ENCODE measurements at regions of chr10 and their contacts with region 1.

Region 1: DNA sequence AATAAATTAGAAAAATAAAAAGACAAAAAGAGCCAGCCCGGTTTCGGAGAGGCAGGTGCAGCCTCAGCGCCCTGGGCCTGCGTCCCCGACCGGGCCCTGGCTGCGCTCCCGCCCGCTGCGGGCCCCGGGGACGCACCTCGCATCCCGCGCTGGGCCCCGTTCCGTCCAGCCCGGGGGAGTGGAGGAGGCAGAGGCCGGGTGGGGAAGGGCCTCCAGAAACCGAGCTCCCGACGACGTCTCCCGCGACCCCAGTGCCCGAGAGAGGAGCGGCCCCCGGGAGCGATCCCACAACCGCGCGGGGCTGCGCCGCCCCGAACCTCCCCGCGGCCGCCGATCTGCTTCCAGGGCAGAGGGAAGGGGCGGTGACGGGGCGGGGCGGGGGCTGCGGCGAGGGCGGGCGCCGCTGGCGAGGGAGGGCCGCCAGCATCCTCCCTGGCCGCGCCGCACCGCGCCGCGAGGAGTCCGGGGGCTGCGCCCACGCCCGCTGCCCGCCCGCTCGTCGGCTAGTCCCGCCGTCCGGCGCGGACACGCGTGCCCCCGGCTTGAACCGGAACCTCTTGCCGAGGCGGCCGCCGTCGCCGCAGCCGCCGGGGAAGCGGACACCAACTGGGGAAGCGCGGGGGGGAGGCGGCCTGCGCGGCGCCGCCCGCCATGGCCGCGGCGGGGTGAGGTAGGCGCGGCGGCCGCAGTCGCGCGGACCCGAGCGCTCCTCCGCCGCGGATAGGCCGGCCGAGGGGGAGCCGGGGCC is at the start of gene CCNY:
- DNase-seq: peak; percentile 84 to 86
- ATAC-seq: peak; percentile 86 to 94 (median 90)
- H3K4me3 ChIP-seq: peak within 1 kb of the TSS; percentile 91 to 99 (median 96)
- H3K27ac ChIP-seq: peak within 1 kb of the TSS; percentile 85 to 96 (median 92)
- H3K4me1 ChIP-seq: peaks cover 14 to 84% (median 78%) of the 10 kb centered on the region in 9 donors
- H3K27me3 ChIP-seq: no peaks in the 10 kb centered on the region
- CTCF ChIP-seq: no peak
- total RNA-seq, gene CCNY: 69.9 to 99.4 (median 90.1) TPM

Region 2: DNA sequence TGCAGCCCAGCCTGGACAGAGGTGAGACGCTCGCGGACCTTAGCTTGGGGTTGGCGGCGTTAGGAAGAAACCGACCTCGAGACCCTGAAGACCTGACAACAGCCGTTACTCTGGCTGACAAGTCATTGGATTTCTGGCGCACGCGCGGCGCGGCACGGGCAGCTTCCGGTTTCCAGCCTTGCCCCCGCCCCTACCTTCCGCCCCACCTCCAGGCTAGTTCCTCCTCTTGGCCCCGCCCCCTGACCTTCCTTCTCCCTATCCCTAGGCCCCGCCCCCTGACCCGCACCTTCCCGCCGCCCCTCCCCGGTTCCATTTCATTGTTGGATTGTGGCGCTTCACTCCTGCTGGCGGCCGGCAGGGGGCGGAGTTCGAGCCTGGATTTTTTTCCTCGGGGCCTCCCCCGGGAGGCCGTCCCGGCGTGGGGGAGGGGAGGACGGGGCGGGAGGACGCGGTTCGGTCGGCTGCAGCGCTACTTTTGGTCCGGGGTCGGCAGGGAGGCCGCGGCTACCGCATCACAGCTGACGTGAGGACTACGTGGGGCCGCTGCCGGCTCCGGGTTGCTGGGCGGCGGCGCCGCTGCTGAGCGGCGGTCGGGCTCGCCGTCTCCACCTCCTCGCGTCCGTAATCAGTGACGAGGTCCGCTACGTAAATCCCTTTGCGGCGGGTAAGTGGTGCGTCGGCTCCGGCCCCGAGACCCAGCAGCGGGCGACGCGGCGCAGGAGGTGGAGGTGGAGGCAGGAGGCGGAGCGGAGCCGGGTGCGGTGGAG is 209.5 kb before region 1 on chr10 and contains the start of gene CREM:
- intact Hi-C with region 1: loop called in 3 of 10 experiments (anchors 10 kb)
- DNase-seq: peak; percentile 99 to 100
- ATAC-seq: peak; percentile 94 to 99 (median 97)
- H3K4me3 ChIP-seq: peak within 1 kb of the TSS; percentile 57 to 92 (median 82)
- H3K27ac ChIP-seq: peak within 1 kb of the TSS; percentile 97 to 100 (median 100)
- H3K4me1 ChIP-seq: peaks cover 3 to 38% (median 21%) of the 10 kb centered on the region in 9 donors
- H3K27me3 ChIP-seq: no peaks in the 10 kb centered on the region
- CTCF ChIP-seq: peak; percentile 84 to 96 (median 88)
- total RNA-seq, gene CREM: 44.1 to 91.7 (median 57.6) TPM

Region 3: DNA sequence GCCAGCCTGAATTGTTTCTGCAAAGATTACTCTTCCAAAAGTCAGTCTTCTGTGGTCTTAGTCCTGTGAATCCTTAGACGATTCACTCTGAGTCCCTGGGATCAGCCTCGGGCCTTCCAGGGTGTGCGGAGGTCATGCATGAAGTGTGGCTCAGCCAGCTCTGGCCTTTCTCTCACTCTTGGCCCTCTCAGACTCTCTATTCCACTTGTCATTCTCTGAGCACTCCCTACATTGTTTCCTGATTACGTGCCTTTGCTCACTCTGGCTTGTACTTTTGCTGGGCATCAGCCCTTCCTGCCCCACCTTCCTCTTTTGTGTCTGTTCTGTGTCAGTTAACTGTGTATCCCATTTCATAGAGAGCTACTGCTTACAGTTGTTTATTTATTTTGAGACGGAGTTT is 36.1 kb after region 1 on chr10:
- intact Hi-C with region 1: loop called in 6 of 10 experiments (anchors 5 kb)
- DNase-seq: peak; percentile 42 to 76
- ATAC-seq: peak; percentile 89 to 97 (median 94)
- H3K4me3 ChIP-seq: peak overlapping the region in 2 of 10 donors; percentile 8 to 12
- H3K27ac ChIP-seq: peak overlapping the region; percentile 77 to 92 (median 86)
- H3K4me1 ChIP-seq: peaks cover 18 to 97% (median 88%) of the 10 kb centered on the region in 9 donors
- H3K27me3 ChIP-seq: no peaks in the 10 kb centered on the region
- CTCF ChIP-seq: no peak

Region 4: DNA sequence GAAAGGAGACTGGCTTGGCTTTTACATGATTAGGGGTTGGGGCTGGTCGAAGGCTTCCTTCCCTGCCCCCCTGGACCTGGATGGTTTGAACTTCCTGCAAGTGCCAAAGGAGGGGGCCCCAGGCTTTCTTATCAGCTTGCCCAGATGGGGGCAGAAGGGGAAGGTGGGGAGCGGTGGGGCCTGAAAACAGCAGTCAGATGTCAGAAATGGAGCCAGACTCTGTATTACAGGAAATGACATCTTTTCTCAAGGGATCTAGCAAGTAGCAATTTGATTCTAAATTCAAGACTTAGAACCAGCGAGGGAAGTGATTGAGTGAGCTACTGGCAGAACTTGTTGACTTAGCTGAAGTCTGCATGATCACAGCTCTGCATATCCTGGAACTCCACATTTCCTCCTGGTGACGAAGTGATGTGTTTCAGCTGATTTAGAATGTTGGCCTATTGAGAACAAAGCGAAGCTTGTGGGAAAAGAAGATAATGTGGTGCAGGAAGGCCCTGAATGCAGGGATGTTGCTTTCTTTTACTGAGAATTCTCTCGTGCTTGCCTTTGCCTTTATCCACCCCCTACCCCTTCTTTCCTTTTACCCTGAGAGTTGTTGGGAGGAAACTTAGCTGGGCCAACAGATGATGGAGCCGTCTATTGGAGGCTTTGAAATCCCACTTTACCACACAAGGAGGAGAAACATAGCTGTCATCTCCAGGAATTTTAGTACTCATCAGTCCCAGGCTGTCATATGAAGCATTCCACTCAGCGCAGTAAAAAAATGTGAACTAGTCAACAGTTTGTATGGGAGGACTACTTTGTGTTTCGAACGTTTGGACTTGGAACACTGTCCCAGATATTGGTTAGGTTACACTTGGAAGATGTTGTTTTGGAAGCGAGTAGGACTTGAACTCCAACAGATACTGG is 43.2 kb after region 1 on chr10:
- intact Hi-C with region 1: loop called in 6 of 10 experiments (anchors 5 kb)
- DNase-seq: peak; percentile 48 to 80
- ATAC-seq: peak; percentile 76 to 93 (median 88)
- H3K4me3 ChIP-seq: peak overlapping the region in 3 of 10 donors; percentile 6 to 22 (median 11)
- H3K27ac ChIP-seq: peak overlapping the region; percentile 9 to 94 (median 82)
- H3K4me1 ChIP-seq: peaks cover 23 to 97% (median 74%) of the 10 kb centered on the region in 9 donors
- H3K27me3 ChIP-seq: no peaks in the 10 kb centered on the region
- CTCF ChIP-seq: peak in 6 of 9 donors; percentile 22 to 43 (median 31)

Region 5: GRCh38 chr10:35447693-35448407 is 111.6 kb after region 1 on chr10:
- intact Hi-C with region 1: loop called in 3 of 10 experiments (anchors 2 to 10 kb)
- DNase-seq: no peak
- ATAC-seq: peak in 5 of 8 donors; percentile 39 to 57 (median 45)
- H3K4me3 ChIP-seq: peak overlapping the region in 1 of 10 donors; percentile 25
- H3K27ac ChIP-seq: peak overlapping the region; percentile 64 to 95 (median 80)
- H3K4me1 ChIP-seq: peaks cover 37 to 84% (median 79%) of the 10 kb centered on the region in 9 donors
- H3K27me3 ChIP-seq: no peaks in the 10 kb centered on the region
- CTCF ChIP-seq: no peak

Region 6: GRCh38 chr10:35462491-35462934 is 126.3 kb after region 1 on chr10:
- intact Hi-C with region 1: loop called in 2 of 10 experiments (anchors 5 to 10 kb)
- DNase-seq: no peak
- ATAC-seq: peak; percentile 25 to 78 (median 62)
- H3K4me3 ChIP-seq: no peak overlapping the region
- H3K27ac ChIP-seq: peak overlapping the region in 5 of 10 donors; percentile 44 to 68 (median 61)
- H3K4me1 ChIP-seq: peaks cover 39 to 100% (median 96%) of the 10 kb centered on the region in 9 donors
- H3K27me3 ChIP-seq: no peaks in the 10 kb centered on the region
- CTCF ChIP-seq: no peak

Measured in heart right ventricle (tissue), 16 donors.